ENCODE measurements at regions of chr11 and their contacts with region 1.

Region 1: GRCh38 chr11:62445314-62445740 is 26.5 kb downstream of the SCGB1A1 start:
- DNase-seq: no peak

Region 2: DNA sequence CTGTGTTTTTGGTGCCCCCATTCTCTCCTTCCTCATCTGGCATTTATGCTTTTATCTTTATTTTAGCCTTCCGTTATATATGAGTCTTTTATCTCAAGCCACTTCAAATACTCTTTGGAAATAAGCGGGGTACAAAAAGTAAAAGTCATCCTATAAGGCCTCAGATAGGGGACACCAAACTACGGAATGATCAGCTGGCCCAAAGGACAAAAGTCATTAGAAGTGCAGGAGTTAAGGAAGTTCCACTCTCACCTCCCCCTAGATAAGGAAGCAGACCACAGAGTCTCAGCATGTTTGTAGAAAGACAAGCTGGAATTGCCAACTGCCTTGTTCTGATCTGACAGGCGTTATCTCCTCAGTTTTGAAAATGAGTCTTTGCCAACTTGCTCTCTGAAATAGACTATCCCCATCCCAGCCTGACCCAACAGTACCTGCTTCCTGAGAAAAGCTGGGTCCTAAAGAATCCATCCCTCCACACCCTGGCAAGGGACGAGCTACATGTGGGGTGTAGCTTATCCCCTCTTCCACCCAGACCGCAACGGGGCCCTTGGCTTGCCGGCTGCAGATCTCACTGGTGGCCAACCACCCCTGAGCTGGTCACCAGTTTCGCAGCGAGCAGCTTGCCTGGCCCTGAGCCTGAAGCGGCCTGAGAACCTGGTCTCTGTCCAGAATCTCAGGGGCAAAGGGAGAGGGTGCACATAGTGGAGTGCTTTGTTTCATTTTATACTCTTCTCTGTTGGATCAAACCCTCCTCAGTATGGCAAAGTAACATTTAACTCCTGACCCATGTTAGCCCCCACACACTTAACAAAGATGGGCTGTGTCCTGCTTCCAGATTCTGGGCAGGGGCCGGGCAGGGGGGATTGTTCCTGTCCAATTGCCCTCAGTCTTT is 603.4 kb before region 1 on chr11:
- intact Hi-C with region 1: no loop called
- DNase-seq: peak in 33 of 42 donors; percentile 28 to 79 (median 55)

Region 3: GRCh38 chr11:62497132-62497915 is 52.0 kb after region 1 on chr11:
- intact Hi-C with region 1: loop called (anchors 5 kb)
- DNase-seq: peak in 36 of 42 donors; percentile 23 to 83 (median 58)

Region 4: DNA sequence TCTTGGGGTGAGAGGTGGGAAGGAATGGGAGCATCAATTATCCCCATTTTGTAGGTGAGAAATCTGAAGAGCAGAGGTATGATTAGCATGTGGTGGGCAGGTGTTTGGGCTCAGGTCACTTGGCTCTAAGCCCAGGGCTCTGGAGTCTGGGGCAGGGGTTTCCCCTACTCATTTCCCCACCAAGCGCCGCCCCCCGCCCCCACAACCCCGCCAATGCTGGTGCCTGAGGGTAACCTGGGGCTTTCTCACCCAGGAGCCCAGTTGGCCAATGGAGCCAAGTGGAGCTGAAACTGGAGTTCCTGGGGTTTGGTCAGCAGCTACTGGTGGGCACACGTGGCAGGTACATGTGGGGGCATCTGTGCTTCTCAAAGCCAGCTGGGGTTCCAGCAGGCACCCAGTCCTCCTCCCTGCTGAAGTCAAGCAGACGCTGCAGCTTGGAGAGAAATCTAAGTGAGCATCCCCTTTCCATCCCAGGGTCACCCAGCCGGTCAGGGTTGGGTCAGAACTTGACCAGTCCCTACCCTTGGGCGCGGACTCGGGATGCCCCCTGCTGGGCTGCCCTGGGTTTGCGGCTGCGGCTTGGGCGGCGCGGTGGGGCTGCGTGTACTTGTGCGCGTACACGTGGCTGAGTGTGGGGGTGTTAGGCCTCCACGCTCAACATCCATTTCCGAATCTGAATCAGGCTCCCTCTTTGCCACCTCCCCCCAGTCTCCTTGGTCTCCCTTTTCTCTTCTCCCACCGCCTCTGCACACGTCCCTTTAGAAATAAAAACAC is 477.5 kb after region 1 on chr11:
- intact Hi-C with region 1: no loop called
- DNase-seq: peak; percentile 39 to 91 (median 76)